ENCODE measurements at regions of chr2 and their contacts with region 1.

Region 1: DNA sequence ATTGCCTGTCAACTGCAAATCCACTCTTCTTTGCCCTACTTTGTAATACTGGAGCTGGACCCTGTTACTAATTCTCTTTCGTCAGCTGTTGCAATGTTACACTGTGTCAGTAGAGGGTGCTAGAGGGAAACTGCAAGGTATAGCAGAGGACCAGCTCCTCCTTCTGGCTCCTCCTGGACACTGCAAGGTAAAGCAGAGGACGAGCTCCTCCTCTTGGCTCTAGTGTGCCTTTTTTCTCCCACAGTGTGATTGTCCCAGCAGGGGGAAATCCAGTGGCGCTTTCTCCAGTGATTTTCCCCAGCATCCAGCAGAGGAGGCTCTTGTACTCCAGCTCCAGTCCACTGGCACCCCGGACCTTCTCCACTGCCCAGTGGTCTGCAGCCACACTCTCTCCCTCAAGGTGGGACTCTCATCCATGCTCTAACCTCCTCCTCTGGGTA is 95.6 kb downstream of the CAPN13 start:
- DNase-seq: peak; percentile 86
- H3K4me3 ChIP-seq: peak overlapping the region in 1 of 2 experiments; percentile 14; a peak in 1 of 4 replicates
- H3K27ac ChIP-seq: no peak overlapping the region
- H3K4me1 ChIP-seq: peaks cover 0 to 3% of the 10 kb centered on the region in 2 experiments; a peak in 1 of 4 replicates
- H3K27me3 ChIP-seq: no peaks in the 10 kb centered on the region
- CTCF ChIP-seq: peak; percentile 99
- EP300 ChIP-seq: no peak
- RAD21 ChIP-seq: peak; percentile 91

Region 2: DNA sequence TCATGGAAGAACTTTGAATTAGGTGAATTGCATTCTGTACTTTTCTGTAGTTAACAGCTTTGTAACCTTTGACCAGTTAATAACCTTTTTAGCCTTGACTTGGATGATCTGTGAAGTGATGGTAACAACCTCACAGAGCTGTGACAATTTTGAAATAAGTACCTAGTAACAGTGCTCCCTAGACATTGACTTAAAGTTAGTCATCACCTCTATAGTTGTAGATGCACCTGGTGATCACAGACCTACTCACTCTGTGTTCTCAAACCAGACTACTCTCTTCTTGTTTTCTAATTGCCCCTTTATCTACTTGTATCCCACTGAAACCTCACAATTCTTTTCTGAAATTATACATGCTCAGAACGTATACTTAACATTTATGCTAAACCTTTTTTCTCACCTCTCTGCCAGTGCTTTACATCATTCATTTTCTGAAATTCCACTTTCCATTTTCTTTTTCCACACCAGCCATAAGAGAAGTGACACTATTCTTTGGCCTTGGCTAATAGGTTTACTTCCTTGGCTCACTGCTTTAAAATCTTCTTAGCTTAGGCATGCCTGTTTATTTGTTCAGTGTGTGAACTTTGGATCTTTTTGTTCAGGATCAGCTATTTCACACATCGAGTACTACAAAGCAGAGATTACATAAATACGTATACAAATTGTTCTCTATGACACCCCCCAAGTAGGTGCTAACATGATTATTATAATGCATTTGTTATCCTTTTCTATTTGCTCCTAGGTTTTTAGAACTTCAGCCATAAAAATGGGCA is 555.6 kb before region 1 on chr2:
- CTCF ChIA-PET with region 1: interaction called, 45 read pairs
- POLR2A ChIA-PET with region 1: no interaction called
- DNase-seq: no peak
- H3K4me3 ChIP-seq: no peak overlapping the region
- H3K27ac ChIP-seq: peak overlapping the region in 1 of 2 experiments; percentile 41; a peak in 2 of 4 replicates
- H3K4me1 ChIP-seq: peaks cover 0 to 39% of the 10 kb centered on the region in 2 experiments; a peak in 2 of 4 replicates
- H3K27me3 ChIP-seq: no peaks in the 10 kb centered on the region
- CTCF ChIP-seq: no peak
- EP300 ChIP-seq: no peak
- RAD21 ChIP-seq: no peak

Region 3: GRCh38 chr2:30208452-30208851 is 503.2 kb before region 1 on chr2:
- CTCF ChIA-PET with region 1: interaction called, 573 read pairs
- POLR2A ChIA-PET with region 1: no interaction called
- DNase-seq: peak; percentile 81
- H3K4me3 ChIP-seq: no peak overlapping the region
- H3K27ac ChIP-seq: no peak overlapping the region
- H3K4me1 ChIP-seq: peaks cover 0 to 10% of the 10 kb centered on the region in 2 experiments; a peak in 2 of 4 replicates
- H3K27me3 ChIP-seq: no peaks in the 10 kb centered on the region; the same call in 1 of the 2 replicates
- CTCF ChIP-seq: peak; percentile 99
- EP300 ChIP-seq: no peak
- RAD21 ChIP-seq: peak; percentile 100

Region 4: DNA sequence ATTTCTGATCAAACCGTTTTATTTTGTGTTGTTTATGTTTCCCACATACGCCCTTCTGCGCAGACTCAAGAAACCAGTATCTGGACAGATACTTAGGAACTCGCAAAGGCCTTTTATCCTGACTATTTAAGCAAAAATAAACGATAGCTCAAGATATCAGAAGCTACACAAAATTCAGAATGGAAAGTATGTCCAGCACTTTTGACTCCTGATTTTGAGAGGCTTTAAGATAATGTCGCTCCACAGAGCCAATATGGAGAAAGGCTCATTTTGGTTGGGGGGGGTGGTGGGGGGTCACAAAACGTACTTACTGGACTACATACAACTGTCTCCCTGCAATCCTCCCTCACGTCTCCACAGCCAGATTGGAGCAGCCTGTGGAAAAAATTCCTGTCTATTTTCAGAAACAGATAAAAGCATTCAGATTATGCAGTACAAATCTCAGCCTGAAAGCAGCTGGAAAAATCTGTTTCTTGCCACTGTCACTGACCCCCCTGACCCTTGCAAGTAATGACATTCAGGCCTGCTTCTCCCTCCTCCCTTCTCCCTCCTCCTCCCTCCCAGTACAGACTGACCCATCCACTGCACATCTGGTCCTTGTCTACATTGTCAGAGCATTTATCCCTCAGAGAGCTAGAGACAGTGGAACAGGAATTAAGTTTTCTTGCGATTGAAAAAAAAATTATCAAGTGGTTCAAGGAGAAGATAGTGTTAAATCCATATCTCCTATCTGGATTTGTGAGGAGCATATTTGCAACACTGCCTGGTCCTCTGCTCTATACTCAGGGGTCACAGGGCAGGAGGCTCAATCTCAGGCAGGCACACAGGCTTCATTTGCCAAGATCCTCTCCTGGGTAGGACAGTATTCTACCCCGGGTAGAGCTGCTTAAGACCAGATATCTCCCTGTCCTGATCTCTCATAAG is 299.4 kb before region 1 on chr2:
- CTCF ChIA-PET with region 1: interaction called, 11 read pairs
- POLR2A ChIA-PET with region 1: no interaction called
- DNase-seq: peak; percentile 73
- H3K4me3 ChIP-seq: no peak overlapping the region
- H3K27ac ChIP-seq: peak overlapping the region in 1 of 2 experiments; percentile 64; a peak in 2 of 4 replicates
- H3K4me1 ChIP-seq: peaks cover 21 to 29% of the 10 kb centered on the region in 2 experiments; a peak in 3 of 4 replicates
- H3K27me3 ChIP-seq: no peaks in the 10 kb centered on the region
- CTCF ChIP-seq: no peak
- EP300 ChIP-seq: peak; percentile 38 to 70; a peak in 3 of 4 replicates
- RAD21 ChIP-seq: no peak

Region 5: DNA sequence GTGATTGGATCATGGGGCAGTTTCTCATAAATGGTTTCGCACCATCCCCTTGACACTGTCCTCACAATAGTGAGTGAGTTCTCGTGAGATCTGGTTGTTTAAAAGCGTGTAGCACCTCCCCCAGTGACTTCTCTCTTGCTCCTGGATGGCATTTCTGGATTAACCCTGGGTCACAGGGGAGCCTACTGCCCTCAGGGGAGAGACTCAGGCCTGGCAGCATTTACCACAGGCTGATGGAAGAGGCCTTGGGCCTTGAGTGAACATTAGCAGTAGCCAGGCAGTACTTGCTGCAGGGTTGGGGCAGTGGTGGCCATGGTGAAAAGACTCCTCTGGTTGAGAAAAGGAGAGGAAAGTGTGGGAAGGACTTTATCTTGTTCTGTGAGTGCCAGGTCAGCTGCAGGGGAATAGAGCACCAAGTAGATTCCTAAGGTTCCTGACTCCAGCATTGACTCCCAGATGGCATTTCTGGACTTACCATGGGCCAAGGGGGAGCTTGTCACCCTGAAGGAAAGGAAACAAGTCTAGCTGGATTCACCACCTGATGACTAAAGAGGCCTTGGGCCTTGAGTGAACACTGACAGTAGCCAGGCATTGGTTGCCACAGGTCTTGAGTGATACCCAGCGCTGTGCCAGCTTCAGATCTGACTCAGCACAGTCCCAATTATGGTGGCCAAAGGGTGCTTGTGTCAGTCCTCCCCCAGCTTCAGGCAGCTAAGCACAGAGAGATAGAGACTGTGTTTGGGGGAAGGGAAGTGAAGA is 135.5 kb after region 1 on chr2:
- CTCF ChIA-PET with region 1: interaction called, 10 read pairs
- POLR2A ChIA-PET with region 1: no interaction called
- DNase-seq: no peak
- H3K4me3 ChIP-seq: no peak overlapping the region
- H3K27ac ChIP-seq: no peak overlapping the region
- H3K4me1 ChIP-seq: no peaks in the 10 kb centered on the region
- H3K27me3 ChIP-seq: no peaks in the 10 kb centered on the region
- CTCF ChIP-seq: no peak
- EP300 ChIP-seq: no peak
- RAD21 ChIP-seq: no peak

Region 6: DNA sequence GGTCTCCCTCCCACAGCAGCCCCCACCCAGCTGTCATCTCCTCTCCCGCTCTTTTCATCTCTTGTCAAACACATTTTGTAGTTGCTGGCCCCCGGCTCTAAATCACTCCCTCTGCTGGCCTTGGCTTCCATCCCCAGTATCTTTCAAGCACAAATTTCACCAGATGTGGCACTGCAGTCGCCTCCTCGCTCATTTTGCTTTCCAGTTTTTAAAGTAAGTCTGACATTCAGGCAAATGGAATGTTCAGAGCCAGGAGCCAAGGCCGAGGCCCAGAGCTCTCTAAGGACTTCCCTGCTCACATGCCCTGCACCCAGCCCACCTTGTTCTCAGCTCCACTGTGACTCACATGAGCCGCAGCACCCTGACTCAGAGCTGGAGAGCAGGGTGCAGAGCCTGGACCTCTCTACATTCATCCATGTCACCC is 268.2 kb after region 1 on chr2:
- CTCF ChIA-PET with region 1: interaction called, 15 read pairs
- POLR2A ChIA-PET with region 1: no interaction called
- DNase-seq: peak; percentile 55
- H3K4me3 ChIP-seq: no peak overlapping the region
- H3K27ac ChIP-seq: peak overlapping the region in 1 of 2 experiments; percentile 80; a peak in 2 of 4 replicates
- H3K4me1 ChIP-seq: peaks cover 0 to 57% of the 10 kb centered on the region in 2 experiments; a peak in 2 of 4 replicates
- H3K27me3 ChIP-seq: no peaks in the 10 kb centered on the region
- CTCF ChIP-seq: peak; percentile 11; the same call in 1 of the 2 replicates
- EP300 ChIP-seq: no peak
- RAD21 ChIP-seq: peak; percentile 48

Region 7: GRCh38 chr2:31333527-31334183 is 622.0 kb after region 1 on chr2:
- CTCF ChIA-PET with region 1: interaction called, 223 read pairs
- POLR2A ChIA-PET with region 1: no interaction called
- DNase-seq: peak; percentile 82
- H3K4me3 ChIP-seq: no peak overlapping the region; a peak in 1 of 4 replicates
- H3K27ac ChIP-seq: peak overlapping the region in 1 of 2 experiments; percentile 43; a peak in 2 of 4 replicates
- H3K4me1 ChIP-seq: peaks cover 25 to 42% of the 10 kb centered on the region in 2 experiments; a peak in 3 of 4 replicates
- H3K27me3 ChIP-seq: no peaks in the 10 kb centered on the region
- CTCF ChIP-seq: peak; percentile 100
- EP300 ChIP-seq: peak in 1 of 2 experiments; percentile 50; a peak in 2 of 4 replicates
- RAD21 ChIP-seq: peak; percentile 100

Measured in SK-N-SH (cell line).